Heart right ventricle (tissue), 16 donors: ENCODE measurements at regions of chr1 and their contacts with region 1.

Region 1: DNA sequence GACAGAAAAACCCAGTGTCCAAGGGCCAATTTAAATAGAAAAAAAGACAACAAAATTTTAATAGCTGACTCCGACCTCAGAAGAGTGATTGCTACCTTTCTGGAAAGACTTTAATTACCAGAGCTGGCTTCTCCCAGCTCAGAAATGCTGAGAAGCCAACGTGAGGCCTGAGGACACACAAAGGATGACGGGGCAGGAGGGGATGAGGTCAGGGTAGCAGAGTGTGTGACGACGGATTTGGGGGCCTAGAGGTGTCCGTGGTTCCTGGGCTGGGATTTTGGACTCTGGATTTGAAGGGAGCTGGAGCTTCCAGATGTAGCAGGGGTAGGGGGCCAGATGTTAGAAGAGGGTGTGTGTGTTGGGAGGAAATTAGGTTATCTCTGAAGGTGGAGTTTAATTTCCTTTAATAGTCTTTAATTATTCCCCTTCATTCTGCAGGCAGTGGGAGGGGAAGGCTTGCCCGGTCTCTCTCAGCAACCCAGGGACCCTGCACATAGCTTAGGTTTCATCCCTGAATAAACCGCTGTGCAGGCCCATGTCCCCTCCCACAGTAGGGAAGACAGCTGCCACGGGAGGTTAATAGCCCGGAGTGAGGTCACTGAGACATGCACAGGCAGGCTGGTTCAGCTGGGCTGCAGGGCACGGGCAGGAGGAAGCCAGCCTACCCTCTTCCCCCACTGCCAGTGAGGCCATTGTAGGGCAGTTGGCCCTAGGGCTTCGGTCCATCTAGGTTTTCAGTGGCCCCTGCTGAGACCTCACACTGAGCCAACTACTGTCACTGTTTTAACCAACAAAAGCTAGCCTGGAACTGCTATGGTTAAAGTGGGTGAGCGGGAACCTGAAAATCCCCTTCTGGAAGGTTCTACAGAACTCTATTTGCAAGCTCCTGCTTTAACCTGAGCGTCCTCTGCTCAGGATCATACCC is 3.8 kb upstream of the PADI3 start:
- DNase-seq: no peak
- ATAC-seq: no peak
- H3K4me3 ChIP-seq: no peak overlapping the region
- H3K27ac ChIP-seq: no peak overlapping the region
- H3K4me1 ChIP-seq: no peaks in the 10 kb centered on the region
- H3K27me3 ChIP-seq: peaks cover 0 to 74% (median 42%) of the 10 kb centered on the region in 7 donors
- CTCF ChIP-seq: no peak

Region 2: GRCh38 chr1:16960560-16961296 is 284.4 kb before region 1 on chr1:
- intact Hi-C with region 1: loop called in 1 of 10 experiments (anchors 10 kb)
- DNase-seq: peak; percentile 72 to 81
- ATAC-seq: peak; percentile 70 to 92 (median 78)
- H3K4me3 ChIP-seq: peak overlapping the region in 8 of 10 donors; percentile 21 to 48 (median 42)
- H3K27ac ChIP-seq: peak overlapping the region in 3 of 10 donors; percentile 25 to 43 (median 34)
- H3K4me1 ChIP-seq: peaks cover 0 to 22% (median 0%) of the 10 kb centered on the region in 9 donors
- H3K27me3 ChIP-seq: no peaks in the 10 kb centered on the region
- CTCF ChIP-seq: peak; percentile 10 to 71 (median 59)

Region 3: DNA sequence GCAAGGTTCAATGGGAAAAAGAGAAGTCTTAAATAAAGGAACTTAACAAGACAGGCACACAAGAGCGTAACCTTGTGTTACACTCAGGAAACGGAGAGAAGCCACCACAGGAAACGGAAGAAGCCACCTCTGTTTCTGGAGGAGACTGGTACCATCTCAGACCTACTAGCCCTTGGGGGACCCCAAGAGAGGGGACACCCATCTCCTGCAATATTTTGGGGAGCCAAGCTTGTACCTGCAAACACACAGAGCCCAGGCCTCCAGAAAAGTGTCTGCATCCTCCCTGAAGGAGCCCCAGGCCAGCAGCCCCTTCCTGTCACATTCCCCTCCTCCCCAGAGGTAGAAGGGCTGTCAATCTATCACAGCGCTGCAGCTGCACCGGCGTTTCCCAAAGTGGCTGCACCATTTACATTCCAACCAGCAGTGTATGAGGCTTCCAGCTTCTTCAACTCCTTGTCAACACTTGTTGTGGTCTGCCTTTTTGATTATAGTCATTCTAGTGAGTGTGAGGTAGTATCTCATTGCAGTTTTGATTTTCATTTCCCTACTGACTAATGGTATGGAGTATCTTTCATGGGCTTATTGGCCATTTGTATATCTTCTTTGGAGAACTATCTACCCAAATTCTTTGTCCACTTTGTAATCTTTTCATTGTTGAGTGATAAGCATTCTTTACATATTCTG is 63.2 kb before region 1 on chr1:
- intact Hi-C with region 1: no loop called
- DNase-seq: no peak
- ATAC-seq: no peak
- H3K4me3 ChIP-seq: no peak overlapping the region
- H3K27ac ChIP-seq: no peak overlapping the region
- H3K4me1 ChIP-seq: peaks cover 0 to 10% (median 0%) of the 10 kb centered on the region in 9 donors
- H3K27me3 ChIP-seq: peaks cover 0 to 60% (median 25%) of the 10 kb centered on the region in 7 donors
- CTCF ChIP-seq: no peak

Region 4: GRCh38 chr1:17215545-17215890 is 29.6 kb before region 1 on chr1:
- intact Hi-C with region 1: no loop called
- DNase-seq: no peak
- ATAC-seq: no peak
- H3K4me3 ChIP-seq: no peak overlapping the region
- H3K27ac ChIP-seq: no peak overlapping the region
- H3K4me1 ChIP-seq: peaks cover 0 to 14% (median 0%) of the 10 kb centered on the region in 9 donors
- H3K27me3 ChIP-seq: peaks cover 0 to 93% (median 74%) of the 10 kb centered on the region in 7 donors
- CTCF ChIP-seq: no peak

Region 5: DNA sequence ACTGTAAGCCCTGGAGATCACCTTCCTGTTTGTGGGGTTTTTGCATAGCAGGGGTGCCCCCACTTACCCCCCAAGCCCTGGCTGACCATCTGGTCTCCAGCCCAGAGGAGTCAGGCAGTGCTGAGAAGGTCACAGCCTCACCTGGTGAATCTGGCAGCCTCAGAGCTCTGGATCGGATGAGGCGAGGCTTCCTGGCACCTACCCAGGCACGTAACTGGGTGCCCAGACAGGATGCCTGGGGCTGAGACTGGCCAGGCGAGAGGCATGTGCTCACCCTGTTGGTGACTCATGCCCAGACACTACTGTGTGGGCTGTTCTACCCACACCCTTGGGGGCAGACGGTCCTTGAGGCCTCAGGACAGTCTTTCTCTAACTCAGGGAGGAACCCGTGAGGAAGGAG is 11.4 kb before region 1 on chr1:
- intact Hi-C with region 1: no loop called
- DNase-seq: peak in 1 of 2 donors; percentile 13
- ATAC-seq: peak in 7 of 8 donors; percentile 38 to 82 (median 66)
- H3K4me3 ChIP-seq: no peak overlapping the region
- H3K27ac ChIP-seq: no peak overlapping the region
- H3K4me1 ChIP-seq: peaks cover 0 to 6% (median 0%) of the 10 kb centered on the region in 9 donors
- H3K27me3 ChIP-seq: peaks cover 0 to 40% (median 9%) of the 10 kb centered on the region in 7 donors
- CTCF ChIP-seq: no peak